ENCODE measurements at regions of chr4 and their contacts with region 1.

Region 1: GRCh38 chr4:44678094-44679041 is at the start of gene GUF1:
- DNase-seq: peak; percentile 85 to 86
- ATAC-seq: peak; percentile 96 to 97
- H3K4me3 ChIP-seq: peak within 1 kb of the TSS; percentile 67 to 90 (median 72)
- H3K27ac ChIP-seq: peak within 1 kb of the TSS; percentile 87 to 97 (median 90)
- H3K4me1 ChIP-seq: peaks cover 19 to 26% of the 10 kb centered on the region in 2 donors
- H3K27me3 ChIP-seq: no peaks in the 10 kb centered on the region
- CTCF ChIP-seq: peak in 2 of 5 experiments; percentile 15 to 43
- POLR2A ChIP-seq: peak; percentile 63 to 64
- total RNA-seq, gene GUF1: 16.4 to 25.3 (median 18.9) TPM

Region 2: DNA sequence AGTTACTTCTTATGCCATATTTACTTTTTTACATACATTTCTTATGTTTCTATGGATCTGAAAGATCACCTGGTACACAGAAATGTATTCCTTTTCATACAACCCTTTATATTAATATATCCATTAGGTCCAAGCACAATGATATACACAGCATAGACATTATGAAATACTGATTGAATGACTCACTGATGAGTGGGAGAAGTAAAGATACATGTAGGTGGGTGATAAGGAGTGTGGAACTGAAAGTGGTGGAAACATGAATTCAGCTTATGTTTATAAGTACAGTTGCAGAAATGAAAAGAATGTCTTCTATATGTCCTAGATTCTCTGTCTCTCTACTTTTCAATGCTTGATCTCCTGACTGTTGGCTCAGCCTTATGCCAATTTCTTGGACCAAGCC is 114.9 kb before region 1 on chr4:
- in situ Hi-C with region 1: no loop called
- intact Hi-C with region 1: no loop called
- DNase-seq: no peak
- ATAC-seq: no peak
- H3K4me3 ChIP-seq: no peak overlapping the region
- H3K27ac ChIP-seq: no peak overlapping the region
- H3K4me1 ChIP-seq: no peaks in the 10 kb centered on the region
- H3K27me3 ChIP-seq: no peaks in the 10 kb centered on the region
- CTCF ChIP-seq: no peak
- POLR2A ChIP-seq: no peak

Region 3: GRCh38 chr4:44651425-44651824 is 26.9 kb before region 1 on chr4 and contains the start of gene YIPF7:
- in situ Hi-C with region 1: no loop called
- intact Hi-C with region 1: loop called (anchors 2 kb)
- DNase-seq: no peak
- ATAC-seq: peak; percentile 91 to 96
- H3K4me3 ChIP-seq: peak within 1 kb of the TSS; percentile 6 to 40 (median 26)
- H3K27ac ChIP-seq: peak within 1 kb of the TSS; percentile 70 to 82 (median 80)
- H3K4me1 ChIP-seq: peaks cover 11 to 30% of the 10 kb centered on the region in 2 donors
- H3K27me3 ChIP-seq: no peaks in the 10 kb centered on the region
- CTCF ChIP-seq: no peak
- POLR2A ChIP-seq: no peak
- total RNA-seq, gene YIPF7: 0.61 to 12.7 (median 5.9) TPM

Region 4: GRCh38 chr4:44726262-44726871 is 48.0 kb after region 1 on chr4 and contains the start of gene GNPDA2:
- in situ Hi-C with region 1: no loop called
- intact Hi-C with region 1: loop called (anchors 2 kb)
- DNase-seq: peak; percentile 81 to 90
- ATAC-seq: peak; percentile 91 to 96
- H3K4me3 ChIP-seq: peak within 1 kb of the TSS; percentile 81 to 95 (median 88)
- H3K27ac ChIP-seq: peak within 1 kb of the TSS; percentile 80 to 87 (median 84)
- H3K4me1 ChIP-seq: peaks cover 11 to 16% of the 10 kb centered on the region in 2 donors
- H3K27me3 ChIP-seq: no peaks in the 10 kb centered on the region
- CTCF ChIP-seq: no peak
- POLR2A ChIP-seq: peak; percentile 43 to 48
- total RNA-seq, gene GNPDA2: 6.2 to 16.6 (median 10.7) TPM